GM10248 (cell line): ENCODE measurements at regions of chr9 and their contacts with region 1.

Region 1: DNA sequence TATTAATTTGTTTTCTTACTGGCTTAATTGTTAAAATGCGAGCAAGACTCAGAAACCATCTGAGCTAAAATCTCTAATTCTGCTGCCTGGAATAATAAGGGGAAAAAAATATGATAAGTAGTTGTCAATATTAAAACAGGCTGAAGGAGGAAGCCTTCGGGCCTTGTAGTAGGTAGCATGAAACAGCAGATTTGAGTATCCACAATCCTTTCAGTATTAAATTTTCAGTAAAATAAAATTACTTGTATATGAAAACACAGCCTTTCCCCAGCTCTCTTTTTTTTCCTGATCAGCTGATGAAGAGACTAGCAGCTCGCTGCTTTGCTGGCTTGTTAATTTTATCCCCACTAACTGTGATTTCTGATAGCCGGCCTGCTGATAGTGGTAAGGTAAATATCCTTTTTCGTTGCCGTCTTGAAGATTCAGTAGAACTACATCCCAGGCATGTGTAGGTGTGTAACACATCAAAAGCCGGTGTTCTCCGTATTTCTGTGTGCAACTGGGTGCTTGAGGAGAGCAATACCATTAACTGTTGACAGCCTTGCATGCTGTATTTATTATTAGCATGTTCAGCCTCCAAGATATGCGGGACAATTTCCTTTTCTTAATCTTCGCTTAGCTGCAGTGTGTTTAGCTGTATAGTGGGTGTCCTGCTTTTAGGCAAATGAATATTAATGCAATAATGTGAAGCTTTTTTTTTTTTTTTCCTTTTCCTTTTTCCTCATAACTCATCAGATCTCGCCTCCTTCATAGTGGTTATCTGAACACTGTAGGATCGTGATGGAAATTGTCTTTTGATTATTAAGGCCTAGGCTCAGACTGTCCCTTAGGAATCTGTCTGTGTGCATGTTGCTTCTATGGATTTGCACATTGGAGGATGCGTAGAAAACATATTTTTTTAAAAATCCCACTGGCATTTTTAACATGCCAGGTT is 144.6 kb downstream of the SMARCA2 start:
- DNase-seq: no peak
- CTCF ChIP-seq: no peak

Region 2: GRCh38 chr9:2173170-2173569 is 13.4 kb after region 1 on chr9:
- CTCF ChIA-PET with region 1: interaction called, 12 read pairs
- POLR2A ChIA-PET with region 1: no interaction called
- DNase-seq: no peak
- CTCF ChIP-seq: no peak